ENCODE measurements at regions of chr11 and their contacts with region 1.

Region 1: GRCh38 chr11:130131961-130132850 is 27.4 kb upstream of the ST14 start:
- DNase-seq: peak; percentile 52 to 78 (median 65)
- ATAC-seq: peak; percentile 96
- H3K4me3 ChIP-seq: no peak overlapping the region
- H3K27ac ChIP-seq: no peak overlapping the region
- H3K4me1 ChIP-seq: peaks cover 0 to 2% of the 10 kb centered on the region in 2 experiments; a peak in 1 of 5 replicates
- H3K27me3 ChIP-seq: no peaks in the 10 kb centered on the region
- CTCF ChIP-seq: peak; percentile 73 to 90 (median 87)
- EP300 ChIP-seq: no peak
- POLR2A ChIP-seq: no peak
- RAD21 ChIP-seq: peak; percentile 93

Region 2: GRCh38 chr11:129067454-129067853 is 1064.8 kb before region 1 on chr11:
- CTCF ChIA-PET with region 1: no interaction called
- POLR2A ChIA-PET with region 1: no interaction called
- in situ Hi-C with region 1: no loop called
- intact Hi-C with region 1: no loop called
- DNase-seq: no peak
- ATAC-seq: no peak
- H3K4me3 ChIP-seq: no peak overlapping the region
- H3K27ac ChIP-seq: no peak overlapping the region
- H3K4me1 ChIP-seq: no peaks in the 10 kb centered on the region
- H3K27me3 ChIP-seq: no peaks in the 10 kb centered on the region
- CTCF ChIP-seq: no peak
- EP300 ChIP-seq: no peak
- POLR2A ChIP-seq: no peak
- RAD21 ChIP-seq: no peak

Region 3: DNA sequence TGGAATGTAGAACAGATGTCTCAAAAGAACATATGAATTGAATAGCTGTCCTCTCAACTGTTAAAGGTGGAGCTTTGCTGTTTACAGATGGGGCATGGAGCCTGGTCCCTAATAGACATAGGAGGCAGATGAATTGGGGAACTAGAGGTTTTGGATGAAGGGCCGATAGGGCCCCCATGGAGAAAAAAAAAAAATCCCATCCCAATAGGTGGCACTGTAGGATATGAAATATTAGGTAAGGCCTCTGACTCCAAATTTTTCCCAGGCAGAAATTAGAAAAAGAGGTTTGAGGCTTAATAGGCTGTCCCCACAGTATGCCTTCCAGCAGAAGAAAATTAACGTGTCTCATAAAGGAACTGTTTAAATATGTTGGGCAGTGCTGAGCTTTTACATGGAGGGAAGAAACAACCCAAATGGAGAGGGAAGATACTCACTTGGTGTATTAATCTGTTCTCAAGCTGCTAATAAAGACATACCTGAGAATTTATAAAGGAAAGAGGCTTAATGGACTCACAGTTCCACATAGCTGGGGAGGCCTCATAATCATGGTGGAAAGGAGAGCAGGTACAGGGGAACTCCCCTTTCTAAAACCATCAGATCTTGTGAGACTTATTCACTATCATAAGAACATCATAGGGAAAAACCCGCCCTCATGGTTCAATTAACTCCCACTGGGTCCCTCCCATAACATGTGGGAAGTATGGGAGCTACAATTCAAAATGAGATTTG is 346.7 kb before region 1 on chr11:
- CTCF ChIA-PET with region 1: no interaction called
- POLR2A ChIA-PET with region 1: no interaction called
- in situ Hi-C with region 1: no loop called
- intact Hi-C with region 1: loop called (anchors 10 kb)
- DNase-seq: peak in 1 of 4 experiments; percentile 15
- ATAC-seq: peak; percentile 59; the same call in 2 of the 3 replicates
- H3K4me3 ChIP-seq: no peak overlapping the region
- H3K27ac ChIP-seq: no peak overlapping the region
- H3K4me1 ChIP-seq: no peaks in the 10 kb centered on the region
- H3K27me3 ChIP-seq: no peaks in the 10 kb centered on the region
- CTCF ChIP-seq: peak; percentile 33 to 57 (median 34); a peak in 4 of 6 replicates
- EP300 ChIP-seq: no peak
- POLR2A ChIP-seq: no peak
- RAD21 ChIP-seq: peak in 1 of 2 experiments; percentile 31; a peak in 1 of 4 replicates

Region 4: GRCh38 chr11:129881570-129882170 is 250.5 kb before region 1 on chr11:
- CTCF ChIA-PET with region 1: no interaction called
- POLR2A ChIA-PET with region 1: no interaction called
- in situ Hi-C with region 1: no loop called
- intact Hi-C with region 1: loop called (anchors 2 kb)
- DNase-seq: peak; percentile 36 to 56 (median 52)
- ATAC-seq: peak; percentile 90
- H3K4me3 ChIP-seq: no peak overlapping the region
- H3K27ac ChIP-seq: no peak overlapping the region
- H3K4me1 ChIP-seq: no peaks in the 10 kb centered on the region
- H3K27me3 ChIP-seq: no peaks in the 10 kb centered on the region
- CTCF ChIP-seq: peak; percentile 56 to 63 (median 56)
- EP300 ChIP-seq: no peak
- POLR2A ChIP-seq: no peak
- RAD21 ChIP-seq: peak in 1 of 2 experiments; percentile 54; a peak in 2 of 4 replicates

Region 5: GRCh38 chr11:129922674-129923073 is 209.5 kb before region 1 on chr11:
- CTCF ChIA-PET with region 1: interaction called, 54 read pairs
- POLR2A ChIA-PET with region 1: no interaction called
- in situ Hi-C with region 1: loop called (anchors 5 kb)
- intact Hi-C with region 1: loop called (anchors 1 kb)
- DNase-seq: no peak
- ATAC-seq: peak; percentile 44; the same call in 2 of the 3 replicates
- H3K4me3 ChIP-seq: no peak overlapping the region
- H3K27ac ChIP-seq: no peak overlapping the region
- H3K4me1 ChIP-seq: no peaks in the 10 kb centered on the region
- H3K27me3 ChIP-seq: no peaks in the 10 kb centered on the region
- CTCF ChIP-seq: no peak
- EP300 ChIP-seq: no peak
- POLR2A ChIP-seq: no peak
- RAD21 ChIP-seq: no peak

Region 6: DNA sequence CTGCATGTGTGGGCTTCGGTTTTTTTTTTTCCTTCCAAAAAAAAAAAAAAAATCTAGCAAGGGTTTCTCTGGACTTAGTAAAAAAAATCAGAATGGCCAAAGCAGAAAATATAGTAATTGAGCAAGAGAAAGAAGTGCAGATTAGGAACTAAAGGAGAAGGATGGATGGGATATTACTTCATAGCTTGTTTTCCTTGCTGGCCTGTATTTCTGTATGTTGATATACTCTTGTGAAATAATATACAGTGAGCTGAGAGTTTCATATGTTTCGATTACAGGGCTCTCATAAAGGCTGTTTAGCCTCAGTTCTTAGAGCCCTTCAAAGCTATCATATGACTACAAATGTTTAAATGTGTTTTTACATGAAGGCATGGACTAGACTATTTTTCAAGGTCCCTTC is 202.5 kb before region 1 on chr11:
- CTCF ChIA-PET with region 1: interaction called, 54 read pairs
- POLR2A ChIA-PET with region 1: interaction called, 3 read pairs
- in situ Hi-C with region 1: loop called (anchors 5 kb)
- intact Hi-C with region 1: no loop called
- DNase-seq: no peak
- ATAC-seq: no peak
- H3K4me3 ChIP-seq: no peak overlapping the region
- H3K27ac ChIP-seq: no peak overlapping the region
- H3K4me1 ChIP-seq: peaks cover 6 to 9% of the 10 kb centered on the region in 2 experiments; a peak in 4 of 5 replicates
- H3K27me3 ChIP-seq: no peaks in the 10 kb centered on the region
- CTCF ChIP-seq: no peak
- EP300 ChIP-seq: no peak
- POLR2A ChIP-seq: no peak
- RAD21 ChIP-seq: no peak

Region 7: GRCh38 chr11:129992161-129992944 is 139.9 kb before region 1 on chr11:
- CTCF ChIA-PET with region 1: interaction called, 13 read pairs
- POLR2A ChIA-PET with region 1: interaction called, 3 read pairs
- in situ Hi-C with region 1: no loop called
- intact Hi-C with region 1: loop called (anchors 1 kb)
- DNase-seq: peak; percentile 46 to 74 (median 65)
- ATAC-seq: peak; percentile 98
- H3K4me3 ChIP-seq: no peak overlapping the region
- H3K27ac ChIP-seq: no peak overlapping the region
- H3K4me1 ChIP-seq: peaks cover 0 to 4% of the 10 kb centered on the region in 2 experiments; a peak in 2 of 5 replicates
- H3K27me3 ChIP-seq: no peaks in the 10 kb centered on the region
- CTCF ChIP-seq: peak; percentile 66 to 74 (median 73)
- EP300 ChIP-seq: no peak
- POLR2A ChIP-seq: no peak
- RAD21 ChIP-seq: peak; percentile 35 to 78

Region 8: GRCh38 chr11:130069684-130070108 is 62.5 kb before region 1 on chr11 and contains the start of gene APLP2:
- CTCF ChIA-PET with region 1: no interaction called
- POLR2A ChIA-PET with region 1: interaction called, 3 read pairs
- in situ Hi-C with region 1: no loop called
- intact Hi-C with region 1: loop called (anchors 2 kb)
- DNase-seq: peak; percentile 95 to 99 (median 96)
- ATAC-seq: peak; percentile 82
- H3K4me3 ChIP-seq: peak within 1 kb of the TSS; percentile 78
- H3K27ac ChIP-seq: peak within 1 kb of the TSS; percentile 90
- H3K4me1 ChIP-seq: peaks cover 11 to 21% of the 10 kb centered on the region in 2 experiments; a peak in 4 of 5 replicates
- H3K27me3 ChIP-seq: no peaks in the 10 kb centered on the region
- CTCF ChIP-seq: no peak
- EP300 ChIP-seq: no peak
- POLR2A ChIP-seq: peak; percentile 96
- RAD21 ChIP-seq: no peak; a peak in 1 of 4 replicates
- polyA plus RNA-seq, gene APLP2: 17.4 to 20.3 TPM

Region 9: GRCh38 chr11:130094614-130095013 is 37.6 kb before region 1 on chr11:
- CTCF ChIA-PET with region 1: no interaction called
- POLR2A ChIA-PET with region 1: no interaction called
- in situ Hi-C with region 1: no loop called
- intact Hi-C with region 1: no loop called
- DNase-seq: no peak
- ATAC-seq: peak; percentile 38
- H3K4me3 ChIP-seq: no peak overlapping the region
- H3K27ac ChIP-seq: peak overlapping the region; percentile 20; the same call in 1 of the 3 replicates
- H3K4me1 ChIP-seq: peaks cover 9 to 33% of the 10 kb centered on the region in 2 experiments; a peak in 4 of 5 replicates
- H3K27me3 ChIP-seq: no peaks in the 10 kb centered on the region
- CTCF ChIP-seq: no peak
- EP300 ChIP-seq: no peak
- POLR2A ChIP-seq: no peak
- RAD21 ChIP-seq: no peak